Activated CD8-positive, alpha-beta memory T cell treated with anti-CD3 and anti-CD28 coated beads, Interleukin-2, amount 10 ng/mL, durations not matched to agents 7 days and 5 days (primary cell): ENCODE measurements at regions of chr11 and their contacts with region 1.

Region 1: GRCh38 chr11:74702383-74703007 is 28.7 kb downstream of the CHRDL2 start:
- DNase-seq: peak; percentile 68
- ATAC-seq: peak; percentile 80
- H3K4me3 Mint-ChIP-seq: no peak overlapping the region
- H3K27ac Mint-ChIP-seq: no peak overlapping the region
- H3K4me1 Mint-ChIP-seq: no peaks in the 10 kb centered on the region
- H3K27me3 Mint-ChIP-seq: peaks cover 4% of the 10 kb centered on the region

Region 2: DNA sequence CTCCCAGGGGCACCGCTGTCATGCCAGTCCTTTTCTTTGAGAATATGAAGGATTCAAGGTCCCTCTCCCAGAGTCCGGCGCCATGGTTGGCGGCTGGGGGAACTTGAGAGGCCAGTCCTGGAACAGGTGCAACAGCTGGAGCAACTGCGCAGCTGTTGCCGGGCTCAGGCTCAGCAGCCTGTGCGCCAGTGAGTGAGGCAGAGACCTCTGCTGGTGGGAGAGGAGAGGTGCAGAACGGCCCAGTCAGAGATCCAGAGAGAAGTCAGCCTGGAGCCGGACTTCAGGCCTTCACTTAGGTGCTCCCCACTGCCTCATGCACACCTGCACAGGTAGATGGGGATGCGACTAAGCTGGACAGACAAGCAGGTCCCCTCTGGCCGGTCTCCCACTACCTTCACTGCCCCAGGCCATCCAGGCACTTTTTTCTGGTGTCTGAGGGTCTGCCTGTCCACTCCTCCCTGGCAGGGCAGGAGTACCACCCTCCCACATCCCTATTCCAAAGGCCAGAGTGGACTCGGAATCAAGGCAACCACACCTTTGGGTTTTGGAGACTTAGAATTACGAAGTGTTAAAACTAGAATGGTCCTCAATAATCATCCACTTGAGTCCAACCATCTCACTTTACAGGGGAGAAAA is 24.2 kb after region 1 on chr11:
- CTCF ChIA-PET with region 1: interaction called, 66 read pairs
- DNase-seq: peak; percentile 71
- ATAC-seq: peak; percentile 97
- H3K4me3 Mint-ChIP-seq: no peak overlapping the region
- H3K27ac Mint-ChIP-seq: no peak overlapping the region
- H3K4me1 Mint-ChIP-seq: peaks cover 3% of the 10 kb centered on the region
- H3K27me3 Mint-ChIP-seq: peaks cover 55% of the 10 kb centered on the region

Region 3: GRCh38 chr11:74739546-74740270 is 37.2 kb after region 1 on chr11:
- CTCF ChIA-PET with region 1: interaction called, 31 read pairs
- DNase-seq: peak; percentile 54
- ATAC-seq: peak; percentile 81
- H3K4me3 Mint-ChIP-seq: no peak overlapping the region
- H3K27ac Mint-ChIP-seq: no peak overlapping the region
- H3K4me1 Mint-ChIP-seq: peaks cover 7% of the 10 kb centered on the region
- H3K27me3 Mint-ChIP-seq: peaks cover 33% of the 10 kb centered on the region

Region 4: GRCh38 chr11:75031771-75032549 is 329.5 kb after region 1 on chr11:
- CTCF ChIA-PET with region 1: no interaction called
- DNase-seq: peak; percentile 68
- ATAC-seq: peak; percentile 75
- H3K4me3 Mint-ChIP-seq: no peak overlapping the region
- H3K27ac Mint-ChIP-seq: no peak overlapping the region
- H3K4me1 Mint-ChIP-seq: peaks cover 9% of the 10 kb centered on the region
- H3K27me3 Mint-ChIP-seq: no peaks in the 10 kb centered on the region